AG04449 (cell line): ENCODE measurements at regions of chr10 and their contacts with region 1.

Region 1: DNA sequence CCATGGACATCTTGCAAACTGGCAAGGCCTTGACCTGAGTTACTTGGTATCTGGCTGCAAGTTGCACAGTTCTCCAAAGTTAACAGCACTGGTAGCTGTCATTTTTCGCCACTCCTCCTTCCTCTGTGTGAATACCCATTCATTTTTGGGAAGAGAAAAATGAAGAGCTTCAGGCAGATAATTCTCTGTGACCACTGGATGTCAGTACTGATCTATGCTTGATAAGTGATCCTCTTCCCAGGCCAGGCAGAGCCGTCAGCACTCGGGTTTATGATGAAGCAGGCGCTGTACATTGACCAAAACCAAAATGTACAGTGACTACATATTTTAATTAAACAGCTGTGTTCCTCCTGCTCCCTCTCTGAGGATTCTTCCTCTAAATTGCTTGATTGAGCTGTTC is 55.9 kb upstream of the PDZD8 start:
- DNase-seq: peak; percentile 17
- H3K4me3 ChIP-seq: no peak overlapping the region
- CTCF ChIP-seq: peak; percentile 54

Region 2: GRCh38 chr10:117418101-117418500 is 13.1 kb before region 1 on chr10:
- CTCF ChIA-PET with region 1: interaction called, 11 read pairs
- POLR2A ChIA-PET with region 1: no interaction called
- DNase-seq: no peak
- H3K4me3 ChIP-seq: no peak overlapping the region
- CTCF ChIP-seq: no peak

Region 3: DNA sequence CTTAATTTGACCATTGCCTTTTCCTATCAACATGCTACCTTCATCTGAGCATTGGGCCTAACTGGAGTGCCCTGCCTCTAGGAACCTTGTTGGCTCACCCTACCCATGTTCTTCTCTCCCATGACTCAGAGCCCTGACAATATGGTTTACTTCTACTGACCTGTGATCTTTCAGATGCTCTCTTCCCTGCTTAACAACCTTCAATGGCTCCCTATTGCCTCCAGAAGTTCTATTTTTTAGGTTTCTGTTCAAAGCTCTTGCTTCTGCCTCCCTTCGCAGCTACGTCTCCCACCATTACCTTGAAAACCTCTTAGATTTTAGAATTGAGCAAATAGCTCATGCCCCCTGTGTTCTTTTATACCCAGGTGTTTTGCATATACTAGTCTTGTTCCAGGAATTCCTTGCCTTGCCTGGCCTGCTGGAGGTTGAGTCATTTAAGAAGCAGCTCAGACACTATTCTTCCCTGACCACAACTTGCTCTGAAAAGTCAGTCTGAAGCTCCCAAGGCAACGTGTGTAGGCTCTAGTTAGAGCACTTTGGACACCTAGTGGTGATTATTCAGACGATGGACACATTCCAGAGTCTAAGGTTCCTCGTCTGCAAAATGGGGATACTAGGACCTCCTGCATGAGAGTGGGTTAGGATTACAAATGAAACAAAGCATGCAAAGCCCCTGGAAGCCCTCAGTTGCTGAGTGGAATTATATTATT is 47.0 kb after region 1 on chr10:
- CTCF ChIA-PET with region 1: interaction called, 38 read pairs
- POLR2A ChIA-PET with region 1: no interaction called
- DNase-seq: peak; percentile 82
- H3K4me3 ChIP-seq: no peak overlapping the region
- CTCF ChIP-seq: peak; percentile 35

Region 4: GRCh38 chr10:117537436-117537903 is 106.3 kb after region 1 on chr10:
- CTCF ChIA-PET with region 1: interaction called, 15 read pairs
- POLR2A ChIA-PET with region 1: no interaction called
- DNase-seq: no peak
- H3K4me3 ChIP-seq: peak overlapping the region; percentile 38
- CTCF ChIP-seq: peak; percentile 47

Region 5: DNA sequence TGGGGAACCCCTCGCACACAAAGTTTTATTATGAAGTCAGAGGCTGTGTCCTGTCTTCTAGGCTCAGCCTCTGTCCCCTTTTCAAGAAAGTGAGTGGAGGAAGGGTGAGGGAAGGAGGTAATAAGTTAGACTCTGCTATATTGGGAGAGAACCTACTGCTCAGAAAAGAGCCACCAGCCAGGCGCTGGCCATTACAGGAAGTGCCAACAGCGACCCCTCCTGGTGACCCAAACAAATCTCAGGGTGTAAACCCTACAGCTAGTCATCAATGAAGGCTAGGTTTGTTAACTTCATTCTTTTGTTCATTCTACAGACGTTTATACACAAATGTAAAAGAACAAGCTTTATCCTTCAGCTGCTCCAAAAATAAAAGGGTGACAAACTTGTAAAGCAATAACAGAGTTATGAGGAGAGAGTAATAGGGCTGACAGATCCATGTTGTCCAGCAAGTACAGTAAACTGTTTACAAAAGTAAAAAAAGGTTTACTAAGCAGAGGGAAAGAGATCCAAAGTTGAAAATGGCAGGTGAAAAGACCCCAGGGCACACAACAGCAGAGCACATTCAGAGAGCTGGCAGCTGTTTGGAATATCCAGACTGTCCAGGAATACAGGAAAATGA is 828.2 kb after region 1 on chr10:
- CTCF ChIA-PET with region 1: interaction called, 10 read pairs
- POLR2A ChIA-PET with region 1: no interaction called
- DNase-seq: no peak
- H3K4me3 ChIP-seq: no peak overlapping the region
- CTCF ChIP-seq: peak; percentile 57